Gastrocnemius medialis (tissue), 4 donors: ENCODE measurements at regions of chr1 and their contacts with region 1.

Region 1: GRCh38 chr1:208245185-208245705 is 1.1 kb upstream of the PLXNA2 start:
- DNase-seq: peak; percentile 81 to 82
- ATAC-seq: peak; percentile 68 to 71
- H3K4me3 ChIP-seq: peak overlapping the region; percentile 78 to 100 (median 86)
- H3K27ac ChIP-seq: peak overlapping the region; percentile 88 to 97 (median 92)
- H3K4me1 ChIP-seq: peaks cover 32% of the 10 kb centered on the region in 2 donors
- H3K27me3 ChIP-seq: no peaks in the 10 kb centered on the region
- CTCF ChIP-seq: peak; percentile 67 to 92 (median 85)
- POLR2A ChIP-seq: no peak

Region 2: DNA sequence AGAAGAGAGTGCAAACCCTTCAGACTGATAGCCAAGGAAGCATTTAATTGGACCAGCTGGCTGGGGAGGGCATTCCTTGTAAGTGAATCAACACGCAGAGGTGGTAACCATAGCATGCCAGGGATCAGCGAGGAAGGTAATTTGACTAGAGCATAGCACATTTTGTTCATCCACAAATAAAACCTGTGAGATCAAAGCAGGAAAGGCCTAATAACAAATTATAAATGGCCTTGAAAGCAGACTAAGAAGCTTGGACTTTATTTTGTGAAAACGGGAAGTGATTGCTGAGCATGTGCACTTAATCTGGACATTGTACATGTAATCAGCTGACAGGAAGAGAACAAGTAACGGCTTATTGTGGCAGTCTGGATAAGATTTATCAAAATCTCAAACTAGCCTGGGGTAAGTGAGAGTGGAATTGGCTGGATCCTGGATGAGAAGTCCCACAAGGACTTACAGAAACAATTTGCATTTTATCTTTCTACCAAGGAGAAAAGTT is 935.4 kb before region 1 on chr1:
- in situ Hi-C with region 1: no loop called
- intact Hi-C with region 1: loop called (anchors 10 kb)
- DNase-seq: peak; percentile 64 to 73
- ATAC-seq: peak; percentile 87 to 92
- H3K4me3 ChIP-seq: peak overlapping the region; percentile 32 to 56 (median 50)
- H3K27ac ChIP-seq: peak overlapping the region; percentile 84 to 92 (median 88)
- H3K4me1 ChIP-seq: peaks cover 30 to 38% of the 10 kb centered on the region in 2 donors
- H3K27me3 ChIP-seq: no peaks in the 10 kb centered on the region
- CTCF ChIP-seq: no peak
- POLR2A ChIP-seq: peak in 1 of 2 donors; percentile 58

Region 3: GRCh38 chr1:207963427-207964194 is 281.6 kb before region 1 on chr1:
- in situ Hi-C with region 1: no loop called
- intact Hi-C with region 1: loop called (anchors 1 kb)
- DNase-seq: peak; percentile 71 to 87
- ATAC-seq: peak; percentile 53 to 68
- H3K4me3 ChIP-seq: peak overlapping the region; percentile 61 to 95 (median 67)
- H3K27ac ChIP-seq: peak overlapping the region; percentile 86 to 97 (median 94)
- H3K4me1 ChIP-seq: peaks cover 34 to 47% of the 10 kb centered on the region in 2 donors
- H3K27me3 ChIP-seq: no peaks in the 10 kb centered on the region
- CTCF ChIP-seq: peak; percentile 92 to 100 (median 100)
- POLR2A ChIP-seq: peak; percentile 70 to 75

Region 4: GRCh38 chr1:208029381-208030287 is 215.6 kb before region 1 on chr1:
- in situ Hi-C with region 1: loop called (anchors 5 to 10 kb)
- intact Hi-C with region 1: no loop called
- DNase-seq: no peak
- ATAC-seq: peak; percentile 40 to 59
- H3K4me3 ChIP-seq: no peak overlapping the region
- H3K27ac ChIP-seq: peak overlapping the region; percentile 41 to 65 (median 60)
- H3K4me1 ChIP-seq: peaks cover 16 to 24% of the 10 kb centered on the region in 2 donors
- H3K27me3 ChIP-seq: no peaks in the 10 kb centered on the region
- CTCF ChIP-seq: no peak
- POLR2A ChIP-seq: no peak

Region 5: DNA sequence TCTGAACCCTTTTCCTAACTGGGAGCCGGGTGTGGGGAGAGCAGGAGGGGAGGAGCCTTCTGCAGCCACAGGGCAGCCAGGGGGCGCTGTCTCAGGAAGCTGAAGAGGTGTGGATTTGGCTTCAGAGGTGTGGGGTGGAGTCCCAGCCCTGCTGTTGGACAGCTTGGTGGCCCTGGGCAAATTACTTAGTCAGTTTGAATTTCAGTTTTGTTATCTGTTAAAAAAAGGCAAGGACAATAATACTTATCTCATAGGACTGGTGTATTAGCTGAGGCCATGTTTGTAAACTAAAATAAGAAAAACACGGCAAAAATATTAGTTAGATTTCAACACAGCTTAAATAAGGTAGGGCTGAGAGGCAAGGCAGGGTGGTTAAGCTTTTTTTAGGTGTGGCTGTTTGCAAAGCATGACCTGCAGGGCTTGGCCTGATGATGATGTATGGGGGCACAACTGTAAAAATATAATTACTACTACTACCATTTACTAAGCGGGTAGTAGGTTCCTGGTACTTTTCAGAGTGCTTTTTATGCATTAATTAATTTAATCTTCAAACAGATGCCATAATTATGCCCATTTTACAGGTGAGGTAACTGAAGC is 112.9 kb before region 1 on chr1:
- in situ Hi-C with region 1: loop called (anchors 5 to 10 kb)
- intact Hi-C with region 1: loop called (anchors 1 kb)
- DNase-seq: peak; percentile 68 to 84
- ATAC-seq: peak; percentile 80 to 83
- H3K4me3 ChIP-seq: no peak overlapping the region
- H3K27ac ChIP-seq: peak overlapping the region; percentile 49 to 86 (median 80)
- H3K4me1 ChIP-seq: peaks cover 65 to 67% of the 10 kb centered on the region in 2 donors
- H3K27me3 ChIP-seq: no peaks in the 10 kb centered on the region
- CTCF ChIP-seq: peak; percentile 89 to 93 (median 92)
- POLR2A ChIP-seq: no peak

Region 6: DNA sequence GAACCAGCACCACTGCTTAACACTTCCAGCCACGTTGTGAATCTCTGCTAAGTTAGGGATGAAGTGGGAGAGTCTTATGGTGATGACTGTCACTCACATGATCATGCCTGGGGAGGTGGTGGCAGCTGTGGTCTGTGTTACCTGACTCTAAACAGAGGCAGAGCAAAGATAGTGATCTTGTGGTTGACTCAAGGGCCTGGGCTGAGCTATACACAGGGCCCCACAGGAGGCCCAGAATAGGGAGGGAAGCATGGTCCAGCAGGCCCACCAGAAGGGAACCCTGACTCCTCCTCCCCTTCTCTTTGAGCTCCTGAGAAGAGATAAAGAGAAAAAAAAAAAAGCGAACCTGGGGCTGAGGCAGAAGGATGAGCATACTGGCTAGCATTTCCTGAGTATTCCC is 56.1 kb before region 1 on chr1:
- in situ Hi-C with region 1: no loop called
- intact Hi-C with region 1: loop called (anchors 5 kb)
- DNase-seq: no peak
- ATAC-seq: peak; percentile 28 to 39
- H3K4me3 ChIP-seq: no peak overlapping the region
- H3K27ac ChIP-seq: peak overlapping the region in 3 of 4 donors; percentile 8 to 54 (median 39)
- H3K4me1 ChIP-seq: peaks cover 37 to 38% of the 10 kb centered on the region in 2 donors
- H3K27me3 ChIP-seq: no peaks in the 10 kb centered on the region
- CTCF ChIP-seq: no peak
- POLR2A ChIP-seq: no peak